ENCODE measurements at regions of chr12 and their contacts with region 1.

Region 1: GRCh38 chr12:90854136-90854689 is 100.8 kb downstream of the CCER1 start:
- DNase-seq: peak; percentile 39
- H3K4me3 Mint-ChIP-seq: no peak overlapping the region
- H3K27ac Mint-ChIP-seq: no peak overlapping the region
- H3K4me1 Mint-ChIP-seq: peaks cover 24% of the 10 kb centered on the region
- H3K27me3 Mint-ChIP-seq: no peaks in the 10 kb centered on the region
- CTCF ChIP-seq: peak; percentile 75

Region 2: GRCh38 chr12:90695415-90695814 is 158.8 kb before region 1 on chr12:
- CTCF ChIA-PET with region 1: no interaction called
- intact Hi-C with region 1: loop called (anchors 5 kb)
- DNase-seq: no peak
- H3K4me3 Mint-ChIP-seq: no peak overlapping the region
- H3K27ac Mint-ChIP-seq: no peak overlapping the region
- H3K4me1 Mint-ChIP-seq: no peaks in the 10 kb centered on the region
- H3K27me3 Mint-ChIP-seq: no peaks in the 10 kb centered on the region
- CTCF ChIP-seq: no peak

Region 3: GRCh38 chr12:90712671-90713070 is 141.5 kb before region 1 on chr12:
- CTCF ChIA-PET with region 1: no interaction called
- intact Hi-C with region 1: loop called (anchors 5 kb)
- DNase-seq: no peak
- H3K4me3 Mint-ChIP-seq: no peak overlapping the region
- H3K27ac Mint-ChIP-seq: no peak overlapping the region
- H3K4me1 Mint-ChIP-seq: peaks cover 10% of the 10 kb centered on the region
- H3K27me3 Mint-ChIP-seq: no peaks in the 10 kb centered on the region
- CTCF ChIP-seq: no peak

Region 4: DNA sequence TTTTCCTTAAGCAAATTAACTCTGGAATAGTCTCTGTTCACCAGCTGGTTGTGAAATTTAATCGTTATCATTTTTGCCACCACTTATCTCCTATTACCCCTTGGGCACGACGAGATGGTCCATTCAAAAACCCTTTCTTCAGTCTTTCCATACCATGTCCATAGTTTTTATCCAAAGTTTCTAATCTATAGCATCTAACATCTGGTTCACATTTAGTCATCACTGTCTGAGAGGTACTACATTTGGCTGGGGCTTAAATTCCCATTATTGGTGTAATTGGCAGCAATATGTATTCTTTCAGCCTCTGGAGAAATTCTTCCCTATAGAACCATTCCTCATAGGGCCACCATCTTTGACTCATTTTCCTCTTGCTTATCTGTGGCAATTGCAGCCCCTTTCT is 62.8 kb before region 1 on chr12:
- CTCF ChIA-PET with region 1: no interaction called
- intact Hi-C with region 1: no loop called
- DNase-seq: no peak
- H3K4me3 Mint-ChIP-seq: no peak overlapping the region
- H3K27ac Mint-ChIP-seq: no peak overlapping the region
- H3K4me1 Mint-ChIP-seq: no peaks in the 10 kb centered on the region
- H3K27me3 Mint-ChIP-seq: no peaks in the 10 kb centered on the region
- CTCF ChIP-seq: no peak

Region 5: GRCh38 chr12:90909069-90909770 is 55.0 kb after region 1 on chr12:
- CTCF ChIA-PET with region 1: interaction called, 6 read pairs
- intact Hi-C with region 1: loop called (anchors 5 kb)
- DNase-seq: peak; percentile 48
- H3K4me3 Mint-ChIP-seq: no peak overlapping the region
- H3K27ac Mint-ChIP-seq: no peak overlapping the region
- H3K4me1 Mint-ChIP-seq: no peaks in the 10 kb centered on the region
- H3K27me3 Mint-ChIP-seq: no peaks in the 10 kb centered on the region
- CTCF ChIP-seq: peak; percentile 63

Region 6: GRCh38 chr12:91074154-91074709 is 220.0 kb after region 1 on chr12:
- CTCF ChIA-PET with region 1: no interaction called
- intact Hi-C with region 1: loop called (anchors 10 kb)
- DNase-seq: no peak
- H3K4me3 Mint-ChIP-seq: no peak overlapping the region
- H3K27ac Mint-ChIP-seq: no peak overlapping the region
- H3K4me1 Mint-ChIP-seq: peaks cover 37% of the 10 kb centered on the region
- H3K27me3 Mint-ChIP-seq: no peaks in the 10 kb centered on the region
- CTCF ChIP-seq: no peak

Region 7: DNA sequence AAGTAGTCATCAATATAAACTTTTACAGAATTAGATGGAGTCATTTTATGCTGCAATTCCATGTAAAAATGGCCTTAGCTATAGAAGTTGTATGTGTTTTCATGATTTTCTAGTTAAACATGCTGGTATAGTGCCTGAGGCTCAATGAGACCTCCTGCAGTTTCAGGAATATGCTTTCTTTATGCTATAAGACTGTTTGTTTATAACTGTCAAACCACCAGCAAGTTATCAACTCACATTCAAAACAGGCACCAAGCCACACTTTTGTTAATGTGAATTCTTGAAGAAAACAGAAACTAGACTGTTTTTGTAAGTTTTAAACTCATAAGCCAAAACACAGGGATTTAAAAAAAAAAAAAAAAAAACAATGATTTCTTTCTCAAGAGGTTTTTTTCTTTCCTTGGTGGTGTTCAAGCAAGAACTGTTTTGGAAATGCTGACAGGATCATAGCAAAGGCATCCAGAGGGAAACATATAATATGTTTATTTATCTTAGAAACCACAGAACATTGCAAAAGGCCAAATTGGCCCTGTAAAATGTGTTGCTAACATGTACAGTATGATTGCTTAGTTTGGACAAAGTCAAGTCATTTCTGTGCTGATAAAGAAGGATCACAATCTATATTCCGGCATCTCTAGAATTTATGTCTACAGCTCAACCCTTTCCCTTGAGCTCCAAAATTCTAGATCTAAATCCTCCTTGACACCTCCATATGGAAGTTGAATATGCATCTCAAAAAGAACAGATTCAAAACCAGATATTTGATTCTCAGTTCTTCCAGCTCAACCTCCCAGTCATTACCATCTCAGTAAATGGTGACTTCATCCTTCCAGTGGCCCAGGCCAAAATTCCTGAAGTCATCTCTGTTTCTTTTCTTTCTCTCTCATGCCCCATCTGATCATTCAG is 286.1 kb after region 1 on chr12:
- CTCF ChIA-PET with region 1: no interaction called
- intact Hi-C with region 1: no loop called
- DNase-seq: no peak
- H3K4me3 Mint-ChIP-seq: no peak overlapping the region
- H3K27ac Mint-ChIP-seq: no peak overlapping the region
- H3K4me1 Mint-ChIP-seq: no peaks in the 10 kb centered on the region
- H3K27me3 Mint-ChIP-seq: no peaks in the 10 kb centered on the region
- CTCF ChIP-seq: no peak

Measured in Calu3 (cell line).